GM13977 (cell line): ENCODE measurements at regions of chr21 and their contacts with region 1.

Region 1: GRCh38 chr21:45846373-45847160 is 135.0 kb upstream of the COL6A1 start:
- DNase-seq: no peak
- CTCF ChIP-seq: no peak

Region 2: GRCh38 chr21:45140346-45140940 is 706.1 kb before region 1 on chr21:
- in situ Hi-C with region 1: loop called (anchors 25 kb)
- DNase-seq: peak; percentile 90
- CTCF ChIP-seq: peak; percentile 86

Region 3: GRCh38 chr21:45554477-45555175 is 291.9 kb before region 1 on chr21:
- in situ Hi-C with region 1: loop called (anchors 25 kb)
- DNase-seq: peak; percentile 94
- CTCF ChIP-seq: peak; percentile 90

Region 4: DNA sequence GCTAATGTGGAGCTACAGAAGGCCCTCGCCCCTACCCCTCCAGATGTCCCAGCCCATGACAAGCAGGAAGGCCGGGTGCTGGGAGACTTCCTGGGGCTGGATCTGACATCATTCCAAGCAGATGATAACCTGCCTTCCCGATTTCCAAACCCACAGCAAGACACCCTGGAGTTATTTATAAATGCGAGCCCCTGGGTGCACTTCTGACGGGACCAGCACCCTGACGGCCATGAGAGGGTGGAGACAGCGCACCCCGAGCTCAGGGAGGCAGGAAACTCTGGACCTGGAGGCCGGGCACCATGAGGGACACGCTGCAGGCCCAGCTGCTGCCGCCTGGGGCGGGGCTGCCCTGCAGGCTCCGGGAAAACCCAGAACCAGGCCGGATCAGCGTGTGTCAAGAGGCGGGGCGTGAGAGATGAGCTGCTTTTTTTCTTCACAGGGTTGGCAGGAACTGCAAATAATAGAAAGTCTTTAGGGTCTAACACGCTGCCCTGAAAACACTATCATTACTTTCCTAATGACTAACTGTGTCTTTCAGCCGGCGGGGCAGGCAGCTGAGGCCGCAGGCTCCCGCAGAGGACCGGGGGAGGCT is 205.6 kb before region 1 on chr21:
- in situ Hi-C with region 1: no loop called
- DNase-seq: peak; percentile 53
- CTCF ChIP-seq: no peak